GM12878 (cell line): ENCODE measurements at regions of chrX and their contacts with region 1.

Region 1: GRCh38 chrX:24150051-24150790 is 692 bp downstream of the ZFX start:
- DNase-seq: peak; percentile 55
- ATAC-seq: peak; percentile 83
- H3K4me3 ChIP-seq: peak overlapping the region; percentile 88
- H3K27ac ChIP-seq: peak overlapping the region; percentile 80
- H3K4me1 ChIP-seq: peaks cover 22% of the 10 kb centered on the region
- H3K27me3 ChIP-seq: no peaks in the 10 kb centered on the region
- CTCF ChIP-seq: peak; percentile 22 to 49 (median 37); a peak in 5 of 6 replicates
- EP300 ChIP-seq: 0 out of 4 replicates have a peak, but pooled peaks of 1 of the 2 experiments have one; percentile 10
- POLR2A ChIP-seq: peak; percentile 88
- RAD21 ChIP-seq: peak; percentile 2; the same call in 1 of the 2 replicates

Region 2: GRCh38 chrX:24081661-24082264 is 68.5 kb before region 1 on chrX:
- CTCF ChIA-PET with region 1: no interaction called
- POLR2A ChIA-PET with region 1: no interaction called
- RAD21 ChIA-PET with region 1: no interaction called
- SMC1A ChIA-PET with region 1: no interaction called
- in situ Hi-C with region 1: loop called (anchors 5 kb)
- intact Hi-C with region 1: no loop called
- DNase-seq: no peak
- ATAC-seq: peak; percentile 76
- H3K4me3 ChIP-seq: no peak overlapping the region
- H3K27ac ChIP-seq: no peak overlapping the region
- H3K4me1 ChIP-seq: peaks cover 9% of the 10 kb centered on the region
- H3K27me3 ChIP-seq: no peaks in the 10 kb centered on the region
- CTCF ChIP-seq: peak; percentile 35 to 57 (median 45)
- EP300 ChIP-seq: no peak
- POLR2A ChIP-seq: no peak
- RAD21 ChIP-seq: peak; percentile 51

Region 3: GRCh38 chrX:24169211-24169610 is 19.0 kb after region 1 on chrX:
- CTCF ChIA-PET with region 1: no interaction called
- POLR2A ChIA-PET with region 1: interaction called, 3 read pairs
- RAD21 ChIA-PET with region 1: no interaction called
- SMC1A ChIA-PET with region 1: interaction called, 6 read pairs
- in situ Hi-C with region 1: no loop called
- intact Hi-C with region 1: loop called (anchors 2 kb)
- DNase-seq: peak; percentile 49
- ATAC-seq: peak; percentile 88
- H3K4me3 ChIP-seq: 0 out of 2 replicates have a peak overlapping the region, but pooled peaks have one; percentile 20
- H3K27ac ChIP-seq: peak overlapping the region; percentile 54
- H3K4me1 ChIP-seq: peaks cover 34% of the 10 kb centered on the region
- H3K27me3 ChIP-seq: no peaks in the 10 kb centered on the region
- CTCF ChIP-seq: no peak
- EP300 ChIP-seq: no peak
- POLR2A ChIP-seq: no peak
- RAD21 ChIP-seq: no peak

Region 4: GRCh38 chrX:24190500-24191156 is 40.4 kb after region 1 on chrX:
- CTCF ChIA-PET with region 1: no interaction called
- POLR2A ChIA-PET with region 1: no interaction called
- RAD21 ChIA-PET with region 1: no interaction called
- SMC1A ChIA-PET with region 1: no interaction called
- in situ Hi-C with region 1: no loop called
- intact Hi-C with region 1: no loop called
- DNase-seq: no peak
- ATAC-seq: no peak
- H3K4me3 ChIP-seq: no peak overlapping the region
- H3K27ac ChIP-seq: no peak overlapping the region
- H3K4me1 ChIP-seq: no peaks in the 10 kb centered on the region; the same call in 1 of the 2 replicates
- H3K27me3 ChIP-seq: no peaks in the 10 kb centered on the region
- CTCF ChIP-seq: no peak
- EP300 ChIP-seq: no peak
- POLR2A ChIP-seq: no peak
- RAD21 ChIP-seq: no peak

Region 5: DNA sequence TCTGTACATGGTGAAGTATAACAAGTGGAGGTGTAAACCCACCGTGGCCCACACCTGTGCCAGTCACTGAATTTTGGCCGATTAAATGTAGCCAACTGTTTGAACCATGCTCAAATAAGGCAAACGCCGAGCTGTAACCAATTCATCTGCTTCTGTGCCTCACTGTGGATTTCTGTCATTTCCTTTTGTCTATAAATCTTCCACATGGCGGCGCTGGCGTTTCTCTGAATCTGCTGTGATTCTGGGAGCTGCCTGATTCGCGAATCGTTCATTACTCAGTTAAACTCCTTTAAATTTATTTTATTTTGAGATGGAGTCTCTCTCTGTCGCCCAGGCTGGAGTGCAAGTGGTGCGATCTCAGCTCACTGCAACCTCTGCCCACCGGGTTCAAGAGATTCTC is 144.4 kb after region 1 on chrX:
- CTCF ChIA-PET with region 1: no interaction called
- POLR2A ChIA-PET with region 1: no interaction called
- RAD21 ChIA-PET with region 1: no interaction called
- SMC1A ChIA-PET with region 1: no interaction called
- in situ Hi-C with region 1: no loop called
- intact Hi-C with region 1: no loop called
- DNase-seq: no peak
- ATAC-seq: no peak
- H3K4me3 ChIP-seq: no peak overlapping the region
- H3K27ac ChIP-seq: no peak overlapping the region
- H3K4me1 ChIP-seq: no peaks in the 10 kb centered on the region
- H3K27me3 ChIP-seq: no peaks in the 10 kb centered on the region
- CTCF ChIP-seq: peak in 2 of 3 experiments; percentile 6 to 16; a peak in 1 of 6 replicates
- EP300 ChIP-seq: no peak
- POLR2A ChIP-seq: no peak
- RAD21 ChIP-seq: peak; percentile 25; the same call in 1 of the 2 replicates